T-cell (primary cell): ENCODE measurements at regions of chr1 and their contacts with region 1.

Region 1: GRCh38 chr1:23098463-23099170 is 70.0 kb downstream of the LUZP1 start:
- DNase-seq: peak; percentile 28 to 86 (median 53)
- ATAC-seq: peak; percentile 45 to 64 (median 46)
- H3K4me3 ChIP-seq: no peak overlapping the region
- H3K4me3 Mint-ChIP-seq: peak overlapping the region in 1 of 3 donors; percentile 18
- H3K27ac ChIP-seq: no peak overlapping the region
- H3K27ac Mint-ChIP-seq: peak overlapping the region; percentile 25 to 43
- H3K4me1 ChIP-seq: peaks cover 8 to 23% of the 10 kb centered on the region in 2 experiments
- H3K4me1 Mint-ChIP-seq: peaks cover 40 to 53% (median 50%) of the 10 kb centered on the region in 3 donors
- H3K27me3 ChIP-seq: no peaks in the 10 kb centered on the region
- H3K27me3 Mint-ChIP-seq: no peaks in the 10 kb centered on the region

Region 2: DNA sequence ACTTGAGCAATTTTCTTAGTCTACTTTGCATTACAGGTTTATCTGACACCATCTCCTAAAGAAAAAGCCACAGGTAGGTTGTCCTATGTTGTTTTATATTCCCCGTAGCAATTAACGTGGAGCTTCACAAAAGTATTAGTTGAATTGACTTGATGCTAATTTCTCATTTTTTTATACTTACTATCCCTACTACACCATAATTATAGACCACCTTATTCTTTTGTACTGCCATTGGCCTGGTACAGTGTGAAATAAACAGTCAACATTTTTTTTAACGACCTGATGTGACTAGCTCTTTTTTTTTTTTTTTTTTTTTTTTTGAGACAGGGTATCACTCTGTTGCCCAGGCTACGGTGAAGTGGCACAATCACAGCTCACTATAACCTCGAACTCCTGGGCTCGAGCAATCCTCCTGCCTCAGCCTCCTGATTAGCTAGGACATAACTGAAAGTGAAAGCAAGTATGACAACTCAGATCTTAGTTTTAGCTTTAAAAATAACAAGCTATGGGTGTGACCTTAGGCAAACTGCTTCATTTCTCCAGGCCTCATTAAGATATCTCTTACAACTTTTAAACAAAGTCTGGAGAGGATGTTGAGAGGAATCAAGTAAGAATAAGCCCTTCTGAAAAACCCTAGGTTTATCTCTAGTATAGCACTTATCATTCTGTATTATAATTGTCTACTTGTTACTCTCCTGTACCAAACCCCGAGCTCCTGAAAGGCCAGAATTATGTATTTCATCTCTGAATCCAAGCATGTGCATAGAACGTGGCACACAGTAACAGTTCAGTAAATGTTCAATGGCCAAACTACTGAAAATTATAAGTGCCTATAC is 20.6 kb after region 1 on chr1:
- CTCF ChIA-PET with region 1: interaction called in 1 of 2 experiments, 35 read pairs
- POLR2A ChIA-PET with region 1: interaction called, 3 to 21 read pairs
- DNase-seq: peak in 34 of 35 experiments; percentile 19 to 62 (median 46)
- ATAC-seq: peak; percentile 62 to 87 (median 70)
- H3K4me3 ChIP-seq: peak overlapping the region in 1 of 2 donors; percentile 12
- H3K4me3 Mint-ChIP-seq: peak overlapping the region; percentile 51 to 74 (median 60)
- H3K27ac ChIP-seq: peak overlapping the region; percentile 90
- H3K27ac Mint-ChIP-seq: peak overlapping the region; percentile 89
- H3K4me1 ChIP-seq: peaks cover 5 to 33% of the 10 kb centered on the region in 2 experiments
- H3K4me1 Mint-ChIP-seq: peaks cover 58 to 74% (median 69%) of the 10 kb centered on the region in 3 donors
- H3K27me3 ChIP-seq: no peaks in the 10 kb centered on the region
- H3K27me3 Mint-ChIP-seq: no peaks in the 10 kb centered on the region

Region 3: GRCh38 chr1:23177438-23178380 is 79.1 kb after region 1 on chr1:
- CTCF ChIA-PET with region 1: interaction called, 42 to 281 read pairs
- POLR2A ChIA-PET with region 1: interaction called in 1 of 2 experiments, 5 read pairs
- DNase-seq: peak in 25 of 35 experiments; percentile 13 to 61 (median 34)
- ATAC-seq: peak; percentile 77 to 84 (median 82)
- H3K4me3 ChIP-seq: peak overlapping the region; percentile 49 to 58
- H3K4me3 Mint-ChIP-seq: peak overlapping the region; percentile 66 to 80 (median 68)
- H3K27ac ChIP-seq: no peak overlapping the region
- H3K27ac Mint-ChIP-seq: no peak overlapping the region
- H3K4me1 ChIP-seq: peaks cover 2 to 11% of the 10 kb centered on the region in 2 experiments
- H3K4me1 Mint-ChIP-seq: peaks cover 8 to 16% (median 13%) of the 10 kb centered on the region in 3 donors
- H3K27me3 ChIP-seq: peaks cover 0 to 14% of the 10 kb centered on the region in 2 experiments
- H3K27me3 Mint-ChIP-seq: peaks cover 3 to 9% of the 10 kb centered on the region in 2 donors

Region 4: DNA sequence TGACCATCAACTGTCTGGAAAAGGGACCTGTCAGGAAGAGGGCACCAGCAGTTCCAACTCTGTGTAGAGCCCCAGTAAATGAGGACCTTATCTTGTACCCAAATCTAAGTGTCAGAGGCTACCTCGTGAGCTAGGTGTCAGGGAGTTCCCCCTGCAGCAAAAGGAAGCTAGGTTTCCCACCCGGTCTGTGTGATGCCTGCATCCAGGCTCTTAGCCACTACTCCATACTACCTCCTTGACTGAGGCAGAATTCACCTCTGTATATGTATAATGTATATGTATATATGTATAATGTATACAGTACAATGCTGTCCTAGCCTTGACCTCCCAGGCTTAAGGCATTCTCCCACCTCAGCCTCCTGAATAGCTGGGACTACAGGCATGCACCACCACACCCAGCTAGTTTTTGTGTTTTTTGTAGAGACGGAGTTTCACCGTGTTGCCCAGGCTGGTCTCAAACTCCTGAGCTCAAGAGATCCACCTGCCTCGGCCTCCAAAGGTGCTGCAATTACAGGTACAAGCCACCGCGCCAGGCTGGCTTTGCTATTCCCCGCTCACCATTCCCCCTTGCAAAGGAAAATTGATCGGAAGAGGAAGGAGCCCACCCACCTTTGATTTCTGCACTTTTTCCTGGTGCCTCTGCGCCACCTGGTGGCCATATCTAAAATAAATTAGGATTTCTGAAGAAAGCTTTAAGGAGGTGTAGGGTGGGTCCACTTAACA is 85.8 kb after region 1 on chr1:
- CTCF ChIA-PET with region 1: interaction called, 42 to 281 read pairs
- POLR2A ChIA-PET with region 1: interaction called, 5 to 10 read pairs
- DNase-seq: peak in 22 of 35 experiments; percentile 7 to 78 (median 30)
- ATAC-seq: peak; percentile 36 to 57 (median 50)
- H3K4me3 ChIP-seq: peak overlapping the region in 1 of 2 donors; percentile 23
- H3K4me3 Mint-ChIP-seq: peak overlapping the region; percentile 66 to 72 (median 69)
- H3K27ac ChIP-seq: no peak overlapping the region
- H3K27ac Mint-ChIP-seq: peak overlapping the region; percentile 49 to 56
- H3K4me1 ChIP-seq: peaks cover 0 to 8% of the 10 kb centered on the region in 2 experiments
- H3K4me1 Mint-ChIP-seq: peaks cover 5 to 11% (median 11%) of the 10 kb centered on the region in 3 donors
- H3K27me3 ChIP-seq: peaks cover 0 to 3% of the 10 kb centered on the region in 2 experiments
- H3K27me3 Mint-ChIP-seq: peaks cover 0 to 6% of the 10 kb centered on the region in 2 donors

Region 5: DNA sequence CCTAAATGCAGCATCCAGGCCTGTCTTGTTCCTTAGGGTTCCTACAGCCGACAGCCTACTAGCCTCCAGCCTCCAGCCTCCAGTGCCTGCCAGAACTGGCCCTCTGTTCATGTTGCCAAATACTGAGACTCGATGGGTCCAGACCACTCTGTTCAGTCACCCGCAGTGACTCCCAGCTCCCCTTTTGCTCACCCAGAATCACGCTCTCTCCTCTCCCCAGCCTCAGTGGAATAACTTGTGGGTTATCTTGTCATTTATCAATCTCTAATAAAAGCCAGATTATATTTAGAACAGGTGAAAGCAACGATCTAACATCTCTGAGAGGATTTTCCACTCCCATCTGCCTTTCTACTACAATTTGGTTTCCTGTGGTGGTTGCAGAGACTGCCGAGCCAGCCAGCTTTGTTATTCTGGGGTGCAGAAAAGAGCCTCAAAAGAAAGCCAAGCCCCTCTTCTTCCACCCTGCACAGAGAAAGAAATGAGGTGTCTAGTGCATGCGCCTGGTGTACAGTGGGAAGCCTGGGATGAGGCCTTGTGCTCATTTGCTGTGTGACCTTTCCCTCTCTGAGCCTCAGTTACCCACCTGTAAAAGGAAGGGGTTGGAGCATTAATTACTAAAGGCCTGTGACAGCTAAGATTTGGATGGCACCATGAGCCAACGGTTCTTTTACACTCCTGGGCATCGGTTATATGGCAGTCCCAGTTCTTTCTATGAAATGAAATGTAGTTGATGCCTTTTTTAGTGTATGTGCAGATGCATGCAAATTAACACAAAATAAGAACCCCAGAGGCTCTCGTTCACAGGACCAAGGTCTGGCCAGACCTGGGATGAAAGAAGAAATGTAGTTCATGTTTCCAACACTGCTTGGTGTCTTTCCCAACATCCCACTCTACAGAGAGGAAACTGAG is 503.6 kb after region 1 on chr1:
- CTCF ChIA-PET with region 1: no interaction called
- POLR2A ChIA-PET with region 1: no interaction called
- DNase-seq: peak in 10 of 35 experiments; percentile 22 to 51 (median 40)
- ATAC-seq: peak; percentile 74 to 76 (median 75)
- H3K4me3 ChIP-seq: peak overlapping the region; percentile 28 to 52
- H3K4me3 Mint-ChIP-seq: peak overlapping the region; percentile 65 to 78 (median 77)
- H3K27ac ChIP-seq: peak overlapping the region; percentile 80
- H3K27ac Mint-ChIP-seq: peak overlapping the region; percentile 96 to 97
- H3K4me1 ChIP-seq: peaks cover 65 to 81% of the 10 kb centered on the region in 2 experiments
- H3K4me1 Mint-ChIP-seq: peaks cover 82 to 84% (median 82%) of the 10 kb centered on the region in 3 donors
- H3K27me3 ChIP-seq: no peaks in the 10 kb centered on the region
- H3K27me3 Mint-ChIP-seq: no peaks in the 10 kb centered on the region